PC-9 (cell line): ENCODE measurements at regions of chr6 and their contacts with region 1.

Region 1: GRCh38 chr6:42391401-42391800 is 60.3 kb downstream of the TRERF1 start:
- DNase-seq: no peak
- H3K4me3 ChIP-seq: no peak overlapping the region
- H3K27ac ChIP-seq: no peak overlapping the region
- H3K4me1 ChIP-seq: no peaks in the 10 kb centered on the region
- H3K27me3 ChIP-seq: no peaks in the 10 kb centered on the region
- CTCF ChIP-seq: no peak

Region 2: DNA sequence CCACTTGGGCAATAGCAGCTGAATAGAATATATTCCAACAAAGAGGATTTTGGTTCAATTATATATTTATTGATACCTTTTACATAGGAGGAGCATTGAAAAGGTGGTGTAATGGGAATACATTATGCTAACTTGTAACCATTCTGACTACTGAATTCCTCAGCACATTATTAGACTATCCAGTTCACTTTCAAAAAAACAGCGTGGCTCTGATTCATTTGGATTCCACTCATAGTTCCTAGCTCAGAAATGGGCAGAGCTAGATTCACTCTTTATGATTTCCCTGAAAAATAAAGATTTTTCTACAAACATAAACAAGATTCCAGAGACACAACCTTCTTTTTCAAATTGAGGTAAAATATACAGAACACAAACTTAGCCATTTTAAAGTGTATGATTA is 69.5 kb after region 1 on chr6:
- CTCF ChIA-PET with region 1: no interaction called
- POLR2A ChIA-PET with region 1: interaction called, 15 read pairs
- intact Hi-C with region 1: no loop called
- DNase-seq: no peak
- H3K4me3 ChIP-seq: no peak overlapping the region
- H3K27ac ChIP-seq: no peak overlapping the region
- H3K4me1 ChIP-seq: no peaks in the 10 kb centered on the region
- H3K27me3 ChIP-seq: no peaks in the 10 kb centered on the region
- CTCF ChIP-seq: no peak